Activated CD8-positive, alpha-beta T cell treated with anti-CD3 and anti-CD28 coated beads, Interleukin-2, amount 10 ng/mL, durations not matched to agents 7 days and 5 days (primary cell): ENCODE measurements at regions of chrX and their contacts with region 1.

Region 1: DNA sequence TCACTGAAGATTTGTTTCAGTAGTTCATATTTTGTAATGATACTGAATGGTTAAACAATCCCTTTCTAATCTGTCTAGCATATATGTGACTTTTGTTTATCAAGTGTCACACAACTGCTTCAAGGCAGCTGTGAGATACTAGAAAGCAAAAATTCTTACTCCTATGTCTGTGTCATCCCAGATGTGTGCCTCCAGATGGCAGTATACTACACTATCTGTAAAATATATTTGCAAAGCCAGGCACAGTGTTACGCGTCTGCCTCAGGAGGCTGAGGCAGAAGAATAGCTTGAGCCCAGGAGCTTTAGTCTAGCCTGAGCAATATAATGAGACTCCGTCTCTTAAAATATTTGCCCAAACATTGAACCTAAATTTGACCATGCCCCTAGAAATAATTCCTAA is 4.0 kb downstream of the NUDT10 start:
- DNase-seq: peak; percentile 37
- ATAC-seq: no peak
- H3K4me3 Mint-ChIP-seq: no peak overlapping the region
- H3K27ac Mint-ChIP-seq: no peak overlapping the region
- H3K4me1 Mint-ChIP-seq: peaks cover 8% of the 10 kb centered on the region
- H3K27me3 Mint-ChIP-seq: peaks cover 2% of the 10 kb centered on the region

Region 2: DNA sequence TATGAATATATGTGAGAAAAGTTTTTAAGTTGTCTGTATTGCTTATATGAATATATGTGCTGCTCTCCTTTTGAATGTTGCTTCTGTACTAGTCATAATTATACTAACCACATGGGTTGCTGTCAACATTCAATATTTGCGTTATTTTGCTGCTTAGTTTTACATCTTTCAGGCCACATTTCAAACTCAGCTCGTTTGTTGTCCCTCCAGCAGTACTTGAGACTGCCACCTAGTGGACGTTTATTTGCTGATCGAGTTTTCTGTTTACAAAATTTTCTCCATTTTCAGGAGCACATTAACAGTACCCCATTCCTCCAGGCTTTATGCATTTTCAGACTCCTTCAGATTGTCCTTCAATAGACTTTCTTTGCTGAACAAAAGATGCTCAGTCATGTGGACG is 84.0 kb after region 1 on chrX:
- CTCF ChIA-PET with region 1: interaction called, 54 read pairs
- POLR2A ChIA-PET with region 1: no interaction called
- DNase-seq: peak; percentile 42
- ATAC-seq: no peak
- H3K4me3 Mint-ChIP-seq: no peak overlapping the region
- H3K27ac Mint-ChIP-seq: no peak overlapping the region
- H3K4me1 Mint-ChIP-seq: no peaks in the 10 kb centered on the region
- H3K27me3 Mint-ChIP-seq: no peaks in the 10 kb centered on the region

Region 3: GRCh38 chrX:51461053-51462044 is 124.8 kb after region 1 on chrX:
- CTCF ChIA-PET with region 1: interaction called, 42 read pairs
- POLR2A ChIA-PET with region 1: no interaction called
- DNase-seq: peak; percentile 24
- ATAC-seq: no peak
- H3K4me3 Mint-ChIP-seq: no peak overlapping the region
- H3K27ac Mint-ChIP-seq: no peak overlapping the region
- H3K4me1 Mint-ChIP-seq: no peaks in the 10 kb centered on the region
- H3K27me3 Mint-ChIP-seq: no peaks in the 10 kb centered on the region